Activated T-helper 2 cell treated with anti-CD3 and anti-CD28 coated beads, Interferon-gamma antibody, Interleukin-2, Interleukin-4, amounts not matched to agents 10 μg/mL and 5 μg/mL and 100 μg/mL, durations not matched to agents 14 hours and 24 hours and 36 hours (primary cell): ENCODE measurements at regions of chr10 and their contacts with region 1.

Region 1: DNA sequence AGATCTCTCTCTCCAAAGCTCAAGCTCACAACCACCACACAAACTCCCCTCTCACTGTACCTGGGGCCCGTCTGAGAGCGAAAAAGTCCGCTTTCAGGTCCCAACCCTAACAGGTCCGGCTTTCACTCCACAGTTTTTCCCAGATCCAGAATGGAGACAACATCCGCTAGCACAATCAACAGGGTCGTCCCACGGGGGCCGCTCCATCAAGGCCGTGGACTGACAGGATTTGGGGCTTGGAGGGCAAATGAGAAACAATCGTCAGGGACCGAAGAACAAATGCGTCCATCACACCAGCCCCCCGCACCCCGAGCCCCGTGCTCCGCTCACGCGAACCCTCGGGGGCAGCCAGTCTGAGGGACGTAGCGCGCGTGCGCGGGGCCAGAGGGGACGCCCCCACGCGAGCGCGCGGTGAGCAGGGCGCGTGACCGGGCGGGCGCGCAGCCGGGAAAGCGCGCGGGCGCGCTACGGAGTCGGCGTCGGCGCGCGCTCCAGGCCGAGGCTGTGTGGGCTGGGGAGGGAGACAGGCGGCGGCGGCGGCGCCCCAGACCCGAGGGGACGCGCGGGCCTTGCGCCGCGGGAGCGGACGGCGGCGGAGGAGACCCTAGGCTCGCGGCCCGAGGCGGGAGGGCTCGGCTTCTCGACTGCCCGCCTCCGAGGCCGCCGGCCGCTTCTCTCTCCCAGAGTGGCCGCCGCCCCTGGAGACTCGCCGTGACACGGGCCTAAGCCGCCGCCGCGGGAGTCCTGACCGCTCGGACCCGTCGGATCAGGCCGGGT is at the start of gene SLK:
- DNase-seq: peak; percentile 81
- H3K4me3 Mint-ChIP-seq: peak within 1 kb of the TSS; percentile 94
- H3K27ac Mint-ChIP-seq: peak within 1 kb of the TSS; percentile 95
- H3K4me1 Mint-ChIP-seq: peaks cover 28% of the 10 kb centered on the region
- H3K27me3 Mint-ChIP-seq: no peaks in the 10 kb centered on the region
- total RNA-seq, gene SLK: 25.2 and 26.7 TPM in 2 replicates

Region 2: DNA sequence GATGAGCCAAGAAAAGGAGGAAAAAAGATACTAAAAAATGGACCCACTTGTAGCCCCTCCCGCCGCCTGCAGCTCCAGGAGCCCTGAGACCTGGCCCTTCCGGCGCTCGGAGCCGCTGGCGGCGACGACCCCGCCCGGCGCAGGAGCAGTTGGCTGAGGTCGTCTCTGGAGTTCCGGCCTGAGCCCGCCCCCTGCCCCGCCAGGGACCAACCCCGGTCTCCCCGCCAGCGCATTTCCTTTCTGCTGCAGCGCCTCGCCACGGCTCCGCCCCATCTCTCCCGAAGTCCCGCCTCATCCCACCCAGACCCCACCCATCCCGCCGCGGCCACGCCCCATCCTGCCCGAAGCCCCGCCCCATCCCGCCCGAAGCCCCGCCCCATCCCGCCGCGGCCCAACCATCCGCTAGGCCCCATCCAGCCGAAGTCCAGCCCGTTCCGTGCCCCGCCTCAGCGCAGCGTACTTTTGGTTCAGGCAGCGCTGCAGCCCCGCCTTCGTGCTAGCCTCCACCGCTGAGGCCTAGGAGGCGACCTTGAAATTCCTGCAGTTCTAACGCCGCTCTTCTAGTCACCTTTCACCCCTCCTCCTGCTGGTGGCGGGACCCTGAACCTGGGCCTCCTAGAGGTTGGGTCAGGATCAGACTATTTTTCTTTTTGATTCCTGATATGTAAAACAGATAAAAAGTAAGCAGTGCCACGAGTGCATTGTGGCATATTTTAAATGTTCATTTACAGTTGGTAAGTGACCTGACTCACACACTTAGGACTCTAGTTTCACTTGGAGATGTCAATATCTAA is 48.6 kb before region 1 on chr10 and contains the start of gene STN1:
- intact Hi-C with region 1: loop called (anchors 1 kb)
- DNase-seq: peak; percentile 95
- H3K4me3 Mint-ChIP-seq: peak within 1 kb of the TSS; percentile 86
- H3K27ac Mint-ChIP-seq: peak within 1 kb of the TSS; percentile 96
- H3K4me1 Mint-ChIP-seq: peaks cover 31% of the 10 kb centered on the region
- H3K27me3 Mint-ChIP-seq: no peaks in the 10 kb centered on the region
- total RNA-seq, gene STN1: 21.7 and 25.1 TPM in 2 replicates

Region 3: DNA sequence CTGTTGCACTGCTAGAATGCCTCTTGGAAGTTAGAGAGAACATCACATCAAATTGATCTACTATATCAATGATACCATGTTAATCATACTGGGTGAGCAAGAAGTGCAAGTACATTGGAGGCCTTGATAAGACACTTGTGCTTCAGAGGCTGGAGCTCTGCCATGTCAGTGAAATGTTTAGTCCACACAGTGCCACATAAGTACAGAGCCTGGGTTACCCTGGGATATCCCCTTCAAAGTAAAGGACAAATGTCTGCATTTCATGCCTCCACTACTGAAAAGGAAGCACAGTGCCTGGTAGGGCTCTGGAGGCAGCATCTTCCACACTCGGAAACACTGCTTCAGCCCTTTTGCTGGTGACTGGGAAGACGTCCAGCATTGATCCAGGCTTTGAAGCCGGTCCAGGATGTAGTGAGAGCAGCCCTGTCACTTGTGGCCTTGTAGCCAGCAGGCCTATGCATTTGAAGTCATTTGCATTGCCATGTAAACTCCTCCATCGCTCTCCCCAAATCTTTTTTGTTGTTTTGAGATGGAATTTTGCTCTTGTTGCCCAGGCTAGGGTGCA is 33.2 kb before region 1 on chr10:
- intact Hi-C with region 1: no loop called
- DNase-seq: no peak
- H3K4me3 Mint-ChIP-seq: no peak overlapping the region
- H3K27ac Mint-ChIP-seq: no peak overlapping the region
- H3K4me1 Mint-ChIP-seq: no peaks in the 10 kb centered on the region
- H3K27me3 Mint-ChIP-seq: peaks cover 15% of the 10 kb centered on the region

Region 4: DNA sequence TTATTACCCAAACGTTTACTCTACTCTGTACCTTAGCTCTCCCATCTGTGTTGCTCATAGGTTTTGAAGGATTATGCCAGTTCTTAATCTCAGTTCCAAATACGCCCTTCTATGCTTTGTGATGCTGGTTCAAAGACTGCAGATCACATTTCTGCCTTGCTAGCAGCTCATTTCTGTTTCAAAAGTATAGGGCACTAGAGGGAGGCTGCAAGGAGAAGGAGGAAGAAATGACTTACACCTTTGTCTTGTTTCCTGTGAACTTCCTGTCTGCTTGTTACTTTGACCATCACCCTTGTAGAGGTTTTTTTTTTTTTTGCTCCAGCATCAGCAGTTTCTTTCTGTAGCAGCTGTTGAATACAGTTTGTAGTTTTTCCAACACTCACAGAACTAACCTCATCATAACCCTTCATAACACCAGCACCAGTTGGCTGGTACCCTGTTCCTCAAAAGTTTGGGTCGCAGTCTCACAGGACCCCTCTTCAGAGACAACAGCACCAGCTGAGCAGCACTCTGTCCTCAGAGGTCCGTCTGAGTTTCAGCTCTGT is 16.6 kb after region 1 on chr10:
- intact Hi-C with region 1: loop called (anchors 2 kb)
- DNase-seq: no peak
- H3K4me3 Mint-ChIP-seq: peak overlapping the region; percentile 61
- H3K27ac Mint-ChIP-seq: peak overlapping the region; percentile 83
- H3K4me1 Mint-ChIP-seq: peaks cover 59% of the 10 kb centered on the region
- H3K27me3 Mint-ChIP-seq: no peaks in the 10 kb centered on the region

Region 5: GRCh38 chr10:104254493-104255310 is 287.8 kb after region 1 on chr10 and contains the start of gene GSTO1:
- intact Hi-C with region 1: loop called (anchors 10 kb)
- DNase-seq: peak; percentile 26
- H3K4me3 Mint-ChIP-seq: peak within 1 kb of the TSS; percentile 99
- H3K27ac Mint-ChIP-seq: peak within 1 kb of the TSS; percentile 97
- H3K4me1 Mint-ChIP-seq: peaks cover 49% of the 10 kb centered on the region
- H3K27me3 Mint-ChIP-seq: peaks cover 7% of the 10 kb centered on the region
- total RNA-seq, gene GSTO1: 168 and 174 TPM in 2 replicates